Breast epithelium (tissue), 4 donors: ENCODE measurements at regions of chr5 and their contacts with region 1.

Region 1: GRCh38 chr5:174843263-174844250 is 119.2 kb downstream of the MSX2 start:
- DNase-seq: no peak
- H3K4me3 ChIP-seq: no peak overlapping the region
- H3K27ac ChIP-seq: no peak overlapping the region
- H3K4me1 ChIP-seq: no peaks in the 10 kb centered on the region
- H3K27me3 ChIP-seq: no peaks in the 10 kb centered on the region
- CTCF ChIP-seq: no peak
- POLR2A ChIP-seq: no peak

Region 2: GRCh38 chr5:173689737-173690360 is 1153.7 kb before region 1 on chr5:
- intact Hi-C with region 1: no loop called
- DNase-seq: peak in 1 of 2 donors; percentile 17
- H3K4me3 ChIP-seq: no peak overlapping the region
- H3K27ac ChIP-seq: peak overlapping the region; percentile 50 to 84
- H3K4me1 ChIP-seq: no peaks in the 10 kb centered on the region
- H3K27me3 ChIP-seq: no peaks in the 10 kb centered on the region
- CTCF ChIP-seq: peak in 1 of 3 donors; percentile 18
- POLR2A ChIP-seq: no peak

Region 3: DNA sequence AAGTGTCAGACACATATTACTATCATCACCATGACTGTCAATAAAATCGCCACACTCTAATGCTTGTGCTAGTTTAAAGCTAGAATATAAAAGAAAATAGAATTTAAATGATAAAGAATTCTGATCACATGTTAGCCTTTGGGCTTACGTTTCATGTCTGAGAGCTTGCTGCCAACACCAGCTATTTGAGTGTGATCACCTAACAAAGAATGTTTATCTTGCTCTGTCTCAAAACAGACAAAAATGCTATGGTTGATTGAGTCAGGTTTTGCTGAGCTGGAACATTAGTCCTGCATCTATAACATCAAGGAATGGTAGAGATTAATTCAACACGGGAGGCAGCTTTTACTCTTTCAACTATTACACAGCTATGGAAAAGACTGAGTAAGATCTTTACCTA is 68.5 kb before region 1 on chr5:
- intact Hi-C with region 1: no loop called
- DNase-seq: no peak
- H3K4me3 ChIP-seq: no peak overlapping the region
- H3K27ac ChIP-seq: no peak overlapping the region
- H3K4me1 ChIP-seq: no peaks in the 10 kb centered on the region
- H3K27me3 ChIP-seq: no peaks in the 10 kb centered on the region
- CTCF ChIP-seq: no peak
- POLR2A ChIP-seq: no peak

Region 4: GRCh38 chr5:174872271-174872670 is 28.7 kb after region 1 on chr5:
- intact Hi-C with region 1: loop called (anchors 1 kb)
- DNase-seq: no peak
- H3K4me3 ChIP-seq: no peak overlapping the region
- H3K27ac ChIP-seq: no peak overlapping the region
- H3K4me1 ChIP-seq: no peaks in the 10 kb centered on the region
- H3K27me3 ChIP-seq: peaks cover 0 to 12% of the 10 kb centered on the region in 2 donors
- CTCF ChIP-seq: no peak
- POLR2A ChIP-seq: no peak